Psoas muscle (tissue), 8 donors: ENCODE measurements at regions of chr16 and their contacts with region 1.

Region 1: GRCh38 chr16:67641779-67642708 is 2.9 kb upstream of the CARMIL2 start:
- DNase-seq: peak; percentile 64 to 87
- ATAC-seq: peak; percentile 85 to 94 (median 91)
- H3K4me3 ChIP-seq: no peak overlapping the region
- H3K27ac ChIP-seq: peak overlapping the region; percentile 83
- H3K4me1 ChIP-seq: peaks cover 24% of the 10 kb centered on the region
- H3K27me3 ChIP-seq: peaks cover 0 to 21% (median 2%) of the 10 kb centered on the region in 3 donors
- CTCF ChIP-seq: no peak

Region 2: GRCh38 chr16:67546761-67547422 is 95.2 kb before region 1 on chr16:
- intact Hi-C with region 1: loop called (anchors 2 to 5 kb)
- DNase-seq: peak; percentile 78 to 87
- ATAC-seq: peak; percentile 62 to 81 (median 73)
- H3K4me3 ChIP-seq: no peak overlapping the region
- H3K27ac ChIP-seq: peak overlapping the region; percentile 49
- H3K4me1 ChIP-seq: peaks cover 44% of the 10 kb centered on the region
- H3K27me3 ChIP-seq: no peaks in the 10 kb centered on the region
- CTCF ChIP-seq: peak; percentile 94

Region 3: GRCh38 chr16:67561824-67562525 is 80.1 kb before region 1 on chr16:
- intact Hi-C with region 1: loop called (anchors 5 kb)
- DNase-seq: peak; percentile 96 to 98
- ATAC-seq: peak; percentile 81 to 90 (median 84)
- H3K4me3 ChIP-seq: peak overlapping the region; percentile 78
- H3K27ac ChIP-seq: peak overlapping the region; percentile 96
- H3K4me1 ChIP-seq: peaks cover 31% of the 10 kb centered on the region
- H3K27me3 ChIP-seq: no peaks in the 10 kb centered on the region
- CTCF ChIP-seq: no peak

Region 4: DNA sequence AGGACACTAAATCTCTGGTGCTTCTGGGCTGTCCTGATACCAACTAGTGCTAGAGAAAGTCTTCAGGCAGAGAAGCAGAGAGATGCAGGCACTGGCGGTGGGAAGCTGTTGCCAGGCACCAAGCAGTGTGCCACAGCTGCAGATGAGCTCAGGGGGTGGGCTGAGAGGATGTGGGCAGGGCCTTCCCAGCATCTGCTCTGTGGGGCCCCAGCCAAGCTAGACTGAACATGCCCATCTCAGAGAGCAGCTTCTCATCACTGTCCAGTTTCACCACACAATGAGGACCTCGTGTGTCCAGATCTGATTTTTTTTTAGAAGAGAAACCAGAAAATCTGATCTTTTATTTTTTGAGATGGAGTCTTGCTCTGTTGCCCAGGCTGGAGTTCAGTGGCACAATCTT is 268.1 kb after region 1 on chr16:
- intact Hi-C with region 1: no loop called
- DNase-seq: no peak
- ATAC-seq: peak in 3 of 4 donors; percentile 47 to 55 (median 48)
- H3K4me3 ChIP-seq: no peak overlapping the region
- H3K27ac ChIP-seq: no peak overlapping the region
- H3K4me1 ChIP-seq: peaks cover 12% of the 10 kb centered on the region
- H3K27me3 ChIP-seq: no peaks in the 10 kb centered on the region
- CTCF ChIP-seq: no peak